WTC11 (cell line): ENCODE measurements at regions of chr3 and their contacts with region 1.

Region 1: GRCh38 chr3:114152519-114153151 is 26.2 kb downstream of the DRD3 start:
- DNase-seq: peak; percentile 90
- ATAC-seq: peak; percentile 65
- H3K4me3 Mint-ChIP-seq: peak overlapping the region; percentile 52
- H3K27ac Mint-ChIP-seq: no peak overlapping the region
- H3K4me1 Mint-ChIP-seq: peaks cover 73% of the 10 kb centered on the region
- H3K27me3 Mint-ChIP-seq: peaks cover 3% of the 10 kb centered on the region; the same call in 1 of the 2 replicates
- CTCF ChIP-seq: peak; percentile 65

Region 2: DNA sequence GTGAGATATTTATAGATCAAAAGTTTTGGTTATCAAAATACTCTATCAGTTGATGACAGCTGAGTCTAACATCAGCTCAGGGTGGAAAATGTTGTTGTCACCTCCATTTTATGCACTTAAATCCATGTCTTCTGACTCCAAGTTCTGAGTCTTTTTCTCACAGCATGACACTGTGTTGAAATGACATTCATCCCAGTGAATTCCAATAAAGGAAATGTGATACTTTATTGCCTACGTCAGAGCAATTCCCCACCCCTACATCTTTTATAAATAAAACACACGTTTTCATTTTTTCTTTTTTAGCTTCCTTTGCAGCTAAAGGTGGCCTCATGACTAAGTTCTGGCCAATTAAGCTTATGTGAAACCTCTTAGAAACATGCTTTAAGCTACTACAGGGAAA is 15.5 kb after region 1 on chr3:
- CTCF ChIA-PET with region 1: interaction called, 17 read pairs
- POLR2A ChIA-PET with region 1: no interaction called
- DNase-seq: no peak
- ATAC-seq: no peak
- H3K4me3 Mint-ChIP-seq: no peak overlapping the region
- H3K27ac Mint-ChIP-seq: no peak overlapping the region
- H3K4me1 Mint-ChIP-seq: peaks cover 5% of the 10 kb centered on the region
- H3K27me3 Mint-ChIP-seq: no peaks in the 10 kb centered on the region; the same call in 1 of the 2 replicates
- CTCF ChIP-seq: no peak

Region 3: GRCh38 chr3:114179575-114179974 is 26.9 kb after region 1 on chr3:
- CTCF ChIA-PET with region 1: interaction called, 49 read pairs
- POLR2A ChIA-PET with region 1: no interaction called
- DNase-seq: peak; percentile 14
- ATAC-seq: peak; percentile 80
- H3K4me3 Mint-ChIP-seq: no peak overlapping the region
- H3K27ac Mint-ChIP-seq: no peak overlapping the region
- H3K4me1 Mint-ChIP-seq: peaks cover 51% of the 10 kb centered on the region
- H3K27me3 Mint-ChIP-seq: no peaks in the 10 kb centered on the region; the same call in 1 of the 2 replicates
- CTCF ChIP-seq: no peak

Region 4: DNA sequence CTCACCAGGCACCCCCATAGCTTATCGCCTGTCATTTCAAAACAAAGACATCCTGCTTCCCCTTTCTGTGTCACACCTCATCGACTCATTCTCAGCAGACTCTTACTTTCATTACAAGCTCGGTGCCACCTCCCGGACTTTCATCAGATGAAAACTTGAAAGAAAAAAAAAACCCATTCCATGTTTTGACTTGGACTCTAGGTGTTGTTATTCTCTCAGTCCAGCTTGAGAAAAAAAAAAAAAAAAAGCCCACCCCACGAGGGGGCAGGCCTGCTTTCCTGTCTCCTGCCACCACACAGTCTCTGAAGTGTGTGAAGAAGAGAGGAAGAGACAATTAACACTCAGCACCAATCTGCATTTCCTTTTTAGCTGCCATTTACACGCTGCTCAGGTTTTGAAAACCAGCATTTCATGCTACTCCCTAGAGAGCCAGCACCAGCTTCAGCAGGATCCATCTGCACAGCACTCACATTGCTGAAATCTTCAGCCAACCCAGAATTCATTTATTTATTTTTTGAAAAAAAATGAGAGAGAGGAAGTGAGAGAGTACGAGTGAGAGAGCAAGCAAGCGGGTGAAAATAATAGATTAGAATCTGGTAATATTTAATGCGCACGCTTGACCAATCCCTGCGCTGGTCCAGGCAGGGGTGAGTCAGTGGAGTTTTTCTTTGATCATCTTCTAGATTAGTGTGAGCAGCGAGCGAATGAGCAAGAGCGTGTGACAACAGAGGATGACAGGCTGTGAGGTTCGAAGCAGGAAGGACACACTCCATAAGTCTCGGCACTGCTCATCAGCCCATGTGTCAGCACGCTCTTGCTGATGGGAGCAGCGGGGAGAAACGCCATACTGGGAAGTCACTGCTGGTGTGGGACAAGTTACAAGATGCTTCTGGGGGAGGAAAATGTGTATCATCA is 61.2 kb after region 1 on chr3:
- CTCF ChIA-PET with region 1: interaction called, 13 read pairs
- POLR2A ChIA-PET with region 1: no interaction called
- DNase-seq: no peak
- ATAC-seq: peak; percentile 68
- H3K4me3 Mint-ChIP-seq: no peak overlapping the region
- H3K27ac Mint-ChIP-seq: 0 out of 2 replicates have a peak overlapping the region, but pooled peaks have one; percentile 14
- H3K4me1 Mint-ChIP-seq: peaks cover 3% of the 10 kb centered on the region
- H3K27me3 Mint-ChIP-seq: peaks cover 2% of the 10 kb centered on the region
- CTCF ChIP-seq: no peak